Aorta (tissue), 5 donors: ENCODE measurements at regions of chr10 and their contacts with region 1.

Region 1: DNA sequence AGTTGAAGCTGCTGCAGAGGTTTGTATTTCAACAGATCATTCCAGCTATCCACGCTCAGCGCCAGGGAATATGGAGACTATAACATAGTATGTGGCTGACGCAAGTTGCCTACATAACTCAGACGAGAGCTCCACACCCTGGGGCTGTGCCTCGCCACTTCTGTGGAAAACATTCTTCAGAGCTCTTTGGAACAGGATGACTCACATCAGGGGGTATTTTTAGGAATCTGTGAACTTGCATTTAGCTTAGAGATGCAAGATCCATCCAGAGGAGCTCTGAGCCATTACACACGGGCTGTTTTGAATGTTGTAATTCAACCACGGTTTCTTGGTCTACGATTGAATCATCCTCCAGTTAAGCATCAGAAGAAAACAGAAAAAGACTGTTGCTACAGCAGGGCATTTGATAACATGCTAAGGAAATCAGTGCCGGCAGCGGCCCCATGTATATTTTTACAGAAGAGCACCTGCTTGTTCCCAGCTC is 481.5 kb upstream of the AKR1E2 start:
- DNase-seq: peak; percentile 88 to 89
- ATAC-seq: peak; percentile 84
- H3K4me3 ChIP-seq: no peak overlapping the region
- H3K27ac ChIP-seq: peak overlapping the region; percentile 48 to 96
- H3K4me1 ChIP-seq: no peaks in the 10 kb centered on the region
- H3K27me3 ChIP-seq: no peaks in the 10 kb centered on the region

Region 2: GRCh38 chr10:3935141-3935540 is 409.4 kb before region 1 on chr10:
- intact Hi-C with region 1: loop called in 1 of 2 experiments (anchors 10 kb)
- DNase-seq: peak in 1 of 2 donors; percentile 63
- ATAC-seq: peak; percentile 78
- H3K4me3 ChIP-seq: peak overlapping the region in 1 of 2 donors; percentile 13
- H3K27ac ChIP-seq: peak overlapping the region; percentile 72 to 74
- H3K4me1 ChIP-seq: peaks cover 2 to 11% of the 10 kb centered on the region in 2 donors
- H3K27me3 ChIP-seq: no peaks in the 10 kb centered on the region

Region 3: GRCh38 chr10:4067531-4067930 is 277.0 kb before region 1 on chr10:
- intact Hi-C with region 1: loop called in 1 of 2 experiments (anchors 10 kb)
- DNase-seq: no peak
- ATAC-seq: no peak
- H3K4me3 ChIP-seq: no peak overlapping the region
- H3K27ac ChIP-seq: no peak overlapping the region
- H3K4me1 ChIP-seq: no peaks in the 10 kb centered on the region
- H3K27me3 ChIP-seq: no peaks in the 10 kb centered on the region

Region 4: GRCh38 chr10:4073912-4074311 is 270.6 kb before region 1 on chr10:
- intact Hi-C with region 1: loop called (anchors 1 to 10 kb)
- DNase-seq: peak; percentile 80 to 82
- ATAC-seq: peak; percentile 72
- H3K4me3 ChIP-seq: no peak overlapping the region
- H3K27ac ChIP-seq: peak overlapping the region in 1 of 2 donors; percentile 78
- H3K4me1 ChIP-seq: peaks cover 3 to 4% of the 10 kb centered on the region in 2 donors
- H3K27me3 ChIP-seq: no peaks in the 10 kb centered on the region

Region 5: GRCh38 chr10:4254101-4254994 is 90.2 kb before region 1 on chr10:
- intact Hi-C with region 1: loop called in 1 of 2 experiments (anchors 10 kb)
- DNase-seq: no peak
- ATAC-seq: no peak
- H3K4me3 ChIP-seq: no peak overlapping the region
- H3K27ac ChIP-seq: no peak overlapping the region
- H3K4me1 ChIP-seq: peaks cover 0 to 2% of the 10 kb centered on the region in 2 donors
- H3K27me3 ChIP-seq: no peaks in the 10 kb centered on the region

Region 6: DNA sequence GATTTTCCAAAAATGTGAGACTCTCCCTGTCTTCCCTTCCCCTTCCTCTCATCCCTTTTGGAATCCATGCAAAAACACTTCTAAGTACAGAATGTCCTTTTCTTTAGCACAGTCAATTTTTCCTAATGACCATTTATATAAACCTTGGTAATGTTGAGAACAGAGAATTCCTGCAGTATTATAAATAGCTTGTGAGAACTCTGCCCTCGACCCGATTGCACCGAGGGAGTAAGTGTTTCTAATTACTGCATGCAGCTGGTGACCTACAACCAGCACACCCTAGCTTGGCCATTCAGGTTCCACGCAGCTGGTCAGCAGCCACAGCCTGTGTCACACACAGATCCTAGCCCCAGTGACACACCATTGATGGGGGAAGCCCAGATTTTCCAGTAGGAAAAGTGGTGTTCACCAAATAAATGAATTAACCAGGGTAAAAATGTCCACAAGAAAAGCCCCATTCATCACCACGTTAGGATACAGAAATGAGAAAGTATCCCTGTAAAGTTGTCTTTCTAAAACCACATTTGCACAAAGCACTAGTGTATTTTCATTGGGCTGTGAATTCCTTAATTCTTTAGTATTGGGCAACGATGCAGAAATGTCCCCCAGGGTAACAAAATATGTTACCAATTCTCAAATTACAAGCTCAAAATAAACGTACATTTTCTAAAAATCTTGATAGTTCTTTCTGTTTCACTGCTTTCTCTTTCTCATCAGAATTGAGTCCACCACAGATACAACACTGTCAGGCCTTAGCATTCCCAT is 60.5 kb before region 1 on chr10:
- intact Hi-C with region 1: loop called in 1 of 2 experiments (anchors 5 kb)
- DNase-seq: peak; percentile 69 to 90
- ATAC-seq: peak; percentile 88
- H3K4me3 ChIP-seq: no peak overlapping the region
- H3K27ac ChIP-seq: peak overlapping the region; percentile 92 to 98
- H3K4me1 ChIP-seq: peaks cover 5 to 13% of the 10 kb centered on the region in 2 donors
- H3K27me3 ChIP-seq: no peaks in the 10 kb centered on the region

Region 7: DNA sequence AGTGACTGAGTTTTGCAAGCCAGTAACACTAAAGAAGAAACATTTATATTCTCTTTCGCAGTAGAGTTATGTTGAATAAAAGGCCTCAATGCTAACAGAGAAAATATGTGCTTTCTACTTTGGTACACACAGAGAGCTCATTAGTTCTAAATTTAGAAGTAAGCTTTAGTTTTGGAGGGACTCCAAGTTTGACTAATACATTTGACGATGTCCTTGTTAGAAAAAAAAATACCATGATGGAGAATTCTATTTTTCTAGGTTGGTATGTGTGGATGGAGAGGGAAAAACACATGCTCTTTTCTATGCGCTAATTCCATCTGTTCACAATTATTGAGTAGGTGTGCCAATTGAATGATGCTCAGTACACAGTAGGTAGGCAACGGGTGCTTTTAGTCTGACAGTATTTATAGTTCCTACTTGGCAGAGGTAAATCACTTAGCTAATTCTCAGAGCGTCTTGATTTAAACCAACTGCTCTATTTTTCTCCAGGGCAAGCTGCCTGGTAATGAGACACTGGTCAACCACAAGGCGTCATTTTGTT is 154.2 kb after region 1 on chr10:
- intact Hi-C with region 1: loop called in 1 of 2 experiments (anchors 5 kb)
- DNase-seq: no peak
- ATAC-seq: peak; percentile 72
- H3K4me3 ChIP-seq: no peak overlapping the region
- H3K27ac ChIP-seq: peak overlapping the region; percentile 78 to 94
- H3K4me1 ChIP-seq: peaks cover 0 to 2% of the 10 kb centered on the region in 2 donors
- H3K27me3 ChIP-seq: no peaks in the 10 kb centered on the region